ENCODE measurements at regions of chr7 and their contacts with region 1.

Region 1: DNA sequence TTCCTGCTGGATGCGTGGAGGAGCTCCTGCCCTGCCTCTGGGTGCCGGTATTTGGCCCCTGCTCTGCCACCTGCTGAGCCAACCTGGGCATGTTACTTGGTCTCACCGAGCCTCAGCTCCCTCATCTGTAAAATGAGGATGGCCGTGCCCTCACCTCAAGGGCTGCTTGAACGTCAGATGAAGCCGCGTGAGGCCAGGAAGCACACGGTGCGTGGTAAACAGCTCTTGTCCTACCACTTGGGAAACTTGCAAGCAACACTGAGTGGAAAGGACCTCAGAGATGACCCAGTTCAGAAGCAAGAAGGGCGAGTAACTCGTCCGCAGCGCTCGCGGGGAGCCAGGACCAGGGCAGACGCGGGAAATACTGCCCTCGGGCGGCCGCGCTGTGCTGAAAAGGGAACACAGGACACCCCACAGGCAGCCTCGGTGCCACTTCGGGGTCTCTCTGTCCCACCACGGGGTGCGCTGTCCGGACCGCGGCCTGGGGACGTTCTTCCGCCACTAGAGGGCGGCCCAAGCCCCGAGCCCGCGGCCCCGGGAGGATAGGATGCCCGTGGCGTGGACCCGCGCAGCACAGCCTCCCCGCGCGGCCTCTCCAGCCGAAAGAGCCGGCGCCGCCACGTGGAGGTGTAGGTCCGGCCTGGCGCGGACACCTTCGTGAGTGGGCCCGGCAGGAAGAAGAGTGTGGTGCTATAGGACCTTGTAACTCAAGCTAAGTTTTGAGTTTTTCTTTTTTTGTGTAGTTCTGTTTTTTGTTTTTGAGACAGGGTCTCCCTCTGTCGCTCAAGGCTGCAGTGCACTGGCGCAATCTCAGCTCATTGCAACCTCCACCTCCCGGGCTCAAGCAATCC is 94.1 kb downstream of the PRKAG2 start:
- DNase-seq: peak; percentile 77
- ATAC-seq: peak; percentile 95
- H3K4me3 Mint-ChIP-seq: peak overlapping the region; percentile 74
- H3K27ac Mint-ChIP-seq: no peak overlapping the region
- H3K4me1 Mint-ChIP-seq: peaks cover 7% of the 10 kb centered on the region
- H3K27me3 Mint-ChIP-seq: no peaks in the 10 kb centered on the region
- CTCF ChIP-seq: peak; percentile 63

Region 2: GRCh38 chr7:151386301-151387132 is 396.3 kb before region 1 on chr7:
- CTCF ChIA-PET with region 1: no interaction called
- POLR2A ChIA-PET with region 1: no interaction called
- intact Hi-C with region 1: no loop called
- DNase-seq: no peak
- ATAC-seq: no peak
- H3K4me3 Mint-ChIP-seq: no peak overlapping the region
- H3K27ac Mint-ChIP-seq: no peak overlapping the region
- H3K4me1 Mint-ChIP-seq: peaks cover 9% of the 10 kb centered on the region
- H3K27me3 Mint-ChIP-seq: peaks cover 13% of the 10 kb centered on the region
- CTCF ChIP-seq: no peak

Region 3: DNA sequence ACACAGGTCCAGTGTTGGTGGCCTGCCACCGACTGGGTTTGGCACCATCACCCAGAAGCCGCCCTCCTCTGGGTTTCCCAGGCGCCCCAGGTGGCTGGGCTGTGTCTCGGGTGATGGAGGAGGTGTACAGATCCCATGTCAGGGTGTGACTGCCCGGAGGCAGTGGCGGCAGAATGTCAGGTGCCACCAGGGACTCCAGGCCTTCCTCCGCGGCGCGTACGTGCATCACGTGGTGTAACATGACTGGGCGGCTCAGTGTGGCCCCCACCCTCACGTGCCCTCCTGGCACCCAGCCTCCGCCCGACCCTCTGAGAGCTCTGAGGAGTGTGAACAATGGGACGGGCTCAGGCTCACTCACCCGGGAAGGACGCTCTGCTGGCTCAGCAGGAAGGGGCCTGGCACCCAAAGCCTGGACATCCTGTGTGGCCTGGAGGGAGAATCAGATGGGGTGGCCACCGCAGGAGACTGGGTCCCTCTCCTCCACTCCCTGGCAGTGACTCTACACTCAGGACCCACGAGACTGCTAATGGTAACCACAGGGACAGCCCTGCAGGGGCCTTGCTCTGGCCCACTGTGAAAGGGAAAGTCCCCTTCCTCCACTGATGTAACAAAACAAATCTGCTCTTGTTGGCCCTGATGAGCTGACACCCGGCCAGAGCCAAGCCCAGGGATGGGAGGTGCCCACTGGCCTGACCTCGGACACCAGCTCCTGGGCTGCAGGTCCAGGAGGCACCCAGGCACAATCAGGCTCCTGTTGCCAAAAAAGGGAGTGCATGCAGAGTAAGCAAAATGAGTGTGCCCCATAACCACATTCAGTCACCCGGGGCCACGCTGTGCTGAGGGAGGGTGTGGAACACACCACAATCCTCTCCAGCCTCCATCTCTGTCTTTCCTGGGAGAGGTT is 70.7 kb before region 1 on chr7:
- CTCF ChIA-PET with region 1: no interaction called
- POLR2A ChIA-PET with region 1: no interaction called
- intact Hi-C with region 1: no loop called
- DNase-seq: no peak
- ATAC-seq: peak; percentile 85
- H3K4me3 Mint-ChIP-seq: no peak overlapping the region
- H3K27ac Mint-ChIP-seq: no peak overlapping the region
- H3K4me1 Mint-ChIP-seq: peaks cover 16% of the 10 kb centered on the region
- H3K27me3 Mint-ChIP-seq: no peaks in the 10 kb centered on the region
- CTCF ChIP-seq: no peak

Region 4: GRCh38 chr7:151838861-151839391 is 56.1 kb after region 1 on chr7:
- CTCF ChIA-PET with region 1: interaction called, 7 read pairs
- POLR2A ChIA-PET with region 1: interaction called, 3 read pairs
- intact Hi-C with region 1: loop called (anchors 1 kb)
- DNase-seq: peak; percentile 49
- ATAC-seq: peak; percentile 80
- H3K4me3 Mint-ChIP-seq: peak overlapping the region; percentile 81
- H3K27ac Mint-ChIP-seq: peak overlapping the region; percentile 90
- H3K4me1 Mint-ChIP-seq: peaks cover 39% of the 10 kb centered on the region
- H3K27me3 Mint-ChIP-seq: no peaks in the 10 kb centered on the region
- CTCF ChIP-seq: no peak

Region 5: DNA sequence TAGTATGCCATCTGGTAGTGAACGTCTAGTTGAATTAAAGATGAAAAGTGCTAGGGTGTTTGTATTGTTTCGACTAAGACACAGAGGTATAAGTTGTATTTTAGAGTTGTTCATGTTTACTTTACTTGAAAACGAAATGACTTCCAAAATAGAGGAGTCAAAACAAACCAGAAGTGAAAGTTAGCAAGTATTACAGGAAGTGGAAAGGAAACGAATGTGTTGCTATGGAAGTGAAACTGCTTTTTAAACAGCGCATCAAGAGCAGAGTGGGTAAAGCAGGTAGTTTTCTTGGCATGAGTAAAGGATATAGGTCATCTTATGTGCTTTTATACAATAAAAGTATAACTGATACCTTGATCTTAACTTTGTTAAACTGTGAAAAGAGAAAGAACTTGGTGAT is 153.4 kb after region 1 on chr7:
- CTCF ChIA-PET with region 1: interaction called, 16 read pairs
- POLR2A ChIA-PET with region 1: interaction called, 3 read pairs
- intact Hi-C with region 1: loop called (anchors 1 kb)
- DNase-seq: no peak
- ATAC-seq: peak; percentile 78
- H3K4me3 Mint-ChIP-seq: peak overlapping the region; percentile 77
- H3K27ac Mint-ChIP-seq: peak overlapping the region; percentile 94
- H3K4me1 Mint-ChIP-seq: peaks cover 45% of the 10 kb centered on the region
- H3K27me3 Mint-ChIP-seq: peaks cover 3% of the 10 kb centered on the region
- CTCF ChIP-seq: no peak

Region 6: DNA sequence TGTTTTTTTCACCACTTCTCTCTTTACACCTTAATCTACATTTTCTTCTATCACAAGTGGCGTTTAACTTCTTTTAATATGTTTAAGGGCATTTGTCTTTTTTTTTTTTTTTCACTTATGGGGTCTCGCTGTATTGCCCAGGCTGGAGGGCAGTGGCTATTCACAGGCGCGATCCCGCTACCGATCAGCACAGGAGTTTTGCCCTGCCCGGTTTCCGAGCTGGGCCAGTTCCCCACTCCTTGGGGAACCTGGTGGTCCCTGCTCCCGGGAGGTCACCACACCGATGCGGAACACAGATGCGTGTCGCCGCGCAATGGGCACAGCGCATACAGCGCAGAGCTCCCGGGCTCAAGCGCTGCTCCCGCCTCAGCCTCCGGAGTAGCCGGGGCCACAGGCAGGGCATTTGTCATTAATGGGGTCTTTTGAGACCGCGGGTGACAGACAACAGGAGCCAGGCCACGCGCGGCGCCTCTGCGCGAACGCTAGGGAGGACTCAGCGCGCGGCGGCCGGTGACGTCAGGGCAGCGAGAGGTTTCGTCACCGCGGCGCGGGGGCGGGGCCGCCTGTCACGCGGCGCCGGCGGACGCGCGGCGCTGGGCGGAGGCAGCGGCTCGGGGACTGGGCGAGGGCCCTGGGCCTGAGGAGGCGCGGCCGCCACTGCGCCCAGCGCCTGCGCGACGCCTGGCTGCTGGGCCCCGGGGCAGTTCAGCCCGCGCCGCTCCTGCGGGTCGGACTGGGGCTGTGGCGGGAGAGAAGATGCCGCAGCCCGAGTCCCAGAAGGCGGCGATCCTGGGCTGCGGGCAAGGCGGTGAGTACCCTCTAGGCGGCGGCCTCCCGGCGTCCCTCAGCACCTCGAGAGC is 242.5 kb after region 1 on chr7 and contains the start of gene GALNT11:
- CTCF ChIA-PET with region 1: interaction called, 5 read pairs
- POLR2A ChIA-PET with region 1: no interaction called
- intact Hi-C with region 1: loop called (anchors 1 kb)
- DNase-seq: peak; percentile 90
- ATAC-seq: peak; percentile 92
- H3K4me3 Mint-ChIP-seq: peak within 1 kb of the TSS; percentile 87
- H3K27ac Mint-ChIP-seq: peak within 1 kb of the TSS; percentile 81
- H3K4me1 Mint-ChIP-seq: peaks cover 11% of the 10 kb centered on the region
- H3K27me3 Mint-ChIP-seq: no peaks in the 10 kb centered on the region
- CTCF ChIP-seq: no peak
- total RNA-seq, gene GALNT11: 9.0 and 10.8 TPM in 2 replicates

Region 7: GRCh38 chr7:152709287-152710152 is 926.7 kb after region 1 on chr7:
- CTCF ChIA-PET with region 1: no interaction called
- POLR2A ChIA-PET with region 1: no interaction called
- intact Hi-C with region 1: loop called (anchors 5 kb)
- DNase-seq: no peak
- ATAC-seq: no peak
- H3K4me3 Mint-ChIP-seq: no peak overlapping the region
- H3K27ac Mint-ChIP-seq: no peak overlapping the region
- H3K4me1 Mint-ChIP-seq: peaks cover 3% of the 10 kb centered on the region
- H3K27me3 Mint-ChIP-seq: no peaks in the 10 kb centered on the region
- CTCF ChIP-seq: no peak